Sigmoid colon (tissue), 7 donors: ENCODE measurements at regions of chr7 and their contacts with region 1.

Region 1: GRCh38 chr7:1432411-1433082 is 26.7 kb downstream of the MICALL2 start:
- DNase-seq: peak; percentile 81
- H3K4me3 ChIP-seq: no peak overlapping the region
- H3K27ac ChIP-seq: no peak overlapping the region
- H3K4me1 ChIP-seq: peaks cover 0 to 10% (median 0%) of the 10 kb centered on the region in 4 donors
- H3K27me3 ChIP-seq: peaks cover 0 to 35% (median 19%) of the 10 kb centered on the region in 3 donors
- CTCF ChIP-seq: peak; percentile 75 to 97 (median 91)
- EP300 ChIP-seq: no peak
- POLR2A ChIP-seq: no peak

Region 2: DNA sequence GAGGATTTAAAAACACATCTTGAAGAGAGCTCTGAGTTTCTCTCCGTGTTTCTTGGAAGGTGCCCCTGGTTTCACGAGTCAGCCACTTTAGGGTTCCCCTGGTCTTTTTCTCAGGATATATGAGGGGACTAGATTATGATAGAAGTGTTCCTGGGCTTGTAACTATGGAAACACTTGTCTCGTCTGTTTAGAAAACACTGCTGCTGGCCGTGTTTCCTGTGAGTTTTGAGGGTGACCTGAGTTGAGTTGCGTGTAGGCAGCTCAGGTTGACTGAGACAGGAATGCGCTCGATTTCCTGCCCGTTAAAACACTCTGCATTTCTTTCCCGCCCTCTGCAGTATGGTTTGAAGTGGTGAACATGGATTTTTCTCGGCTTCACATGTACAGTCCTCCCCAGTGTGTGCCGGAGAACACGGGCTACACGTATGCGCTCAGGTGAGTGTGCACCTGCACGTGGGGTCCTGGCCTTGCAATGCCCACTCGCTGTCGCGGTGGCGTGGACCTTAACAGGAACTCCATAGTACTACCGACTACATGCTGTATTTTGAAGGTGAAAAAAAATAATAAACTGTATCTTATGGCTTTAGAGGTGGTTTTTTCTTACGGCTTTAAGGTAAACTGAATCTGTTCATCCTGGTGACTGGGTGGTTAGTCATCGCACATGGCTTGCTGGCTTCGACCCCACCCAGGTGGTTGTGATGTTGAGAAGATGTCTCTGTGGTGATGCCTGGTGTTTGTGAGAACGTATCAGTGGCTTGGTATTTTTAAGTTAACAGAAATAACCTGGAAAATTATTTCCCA is 600.2 kb before region 1 on chr7 and contains the start of gene SUN1:
- intact Hi-C with region 1: no loop called
- DNase-seq: peak; percentile 71
- H3K4me3 ChIP-seq: peak within 1 kb of the TSS; percentile 3 to 29 (median 10)
- H3K27ac ChIP-seq: peak within 1 kb of the TSS; percentile 84 to 92 (median 89)
- H3K4me1 ChIP-seq: peaks cover 0 to 88% (median 85%) of the 10 kb centered on the region in 4 donors
- H3K27me3 ChIP-seq: no peaks in the 10 kb centered on the region
- CTCF ChIP-seq: no peak
- EP300 ChIP-seq: no peak
- POLR2A ChIP-seq: no peak
- total RNA-seq, gene SUN1: 108 to 130 (median 119) TPM

Region 3: GRCh38 chr7:1193593-1194424 is 238.7 kb before region 1 on chr7:
- intact Hi-C with region 1: loop called (anchors 10 kb)
- DNase-seq: no peak
- H3K4me3 ChIP-seq: no peak overlapping the region
- H3K27ac ChIP-seq: no peak overlapping the region
- H3K4me1 ChIP-seq: peaks cover 0 to 11% (median 10%) of the 10 kb centered on the region in 4 donors
- H3K27me3 ChIP-seq: peaks cover 6 to 49% (median 26%) of the 10 kb centered on the region in 3 donors
- CTCF ChIP-seq: peak in 3 of 4 experiments; percentile 10 to 31 (median 11)
- EP300 ChIP-seq: no peak
- POLR2A ChIP-seq: no peak

Region 4: GRCh38 chr7:1225441-1226185 is 206.9 kb before region 1 on chr7:
- intact Hi-C with region 1: loop called (anchors 2 kb)
- DNase-seq: no peak
- H3K4me3 ChIP-seq: no peak overlapping the region
- H3K27ac ChIP-seq: no peak overlapping the region
- H3K4me1 ChIP-seq: peaks cover 0 to 28% (median 23%) of the 10 kb centered on the region in 4 donors
- H3K27me3 ChIP-seq: peaks cover 77 to 97% (median 95%) of the 10 kb centered on the region in 3 donors
- CTCF ChIP-seq: peak; percentile 36 to 84 (median 50)
- EP300 ChIP-seq: no peak
- POLR2A ChIP-seq: no peak

Region 5: GRCh38 chr7:1473864-1474512 is 41.4 kb after region 1 on chr7:
- intact Hi-C with region 1: loop called (anchors 1 kb)
- DNase-seq: peak; percentile 93
- H3K4me3 ChIP-seq: no peak overlapping the region
- H3K27ac ChIP-seq: no peak overlapping the region
- H3K4me1 ChIP-seq: peaks cover 0 to 10% (median 5%) of the 10 kb centered on the region in 4 donors
- H3K27me3 ChIP-seq: no peaks in the 10 kb centered on the region
- CTCF ChIP-seq: peak; percentile 77 to 94 (median 88)
- EP300 ChIP-seq: no peak
- POLR2A ChIP-seq: no peak